Activated CD4-positive, alpha-beta memory T cell treated with anti-CD3 and anti-CD28 coated beads, Interleukin-2, amount 10 ng/mL, durations not matched to agents 7 days and 5 days (primary cell): ENCODE measurements at regions of chr21 and their contacts with region 1.

Region 1: DNA sequence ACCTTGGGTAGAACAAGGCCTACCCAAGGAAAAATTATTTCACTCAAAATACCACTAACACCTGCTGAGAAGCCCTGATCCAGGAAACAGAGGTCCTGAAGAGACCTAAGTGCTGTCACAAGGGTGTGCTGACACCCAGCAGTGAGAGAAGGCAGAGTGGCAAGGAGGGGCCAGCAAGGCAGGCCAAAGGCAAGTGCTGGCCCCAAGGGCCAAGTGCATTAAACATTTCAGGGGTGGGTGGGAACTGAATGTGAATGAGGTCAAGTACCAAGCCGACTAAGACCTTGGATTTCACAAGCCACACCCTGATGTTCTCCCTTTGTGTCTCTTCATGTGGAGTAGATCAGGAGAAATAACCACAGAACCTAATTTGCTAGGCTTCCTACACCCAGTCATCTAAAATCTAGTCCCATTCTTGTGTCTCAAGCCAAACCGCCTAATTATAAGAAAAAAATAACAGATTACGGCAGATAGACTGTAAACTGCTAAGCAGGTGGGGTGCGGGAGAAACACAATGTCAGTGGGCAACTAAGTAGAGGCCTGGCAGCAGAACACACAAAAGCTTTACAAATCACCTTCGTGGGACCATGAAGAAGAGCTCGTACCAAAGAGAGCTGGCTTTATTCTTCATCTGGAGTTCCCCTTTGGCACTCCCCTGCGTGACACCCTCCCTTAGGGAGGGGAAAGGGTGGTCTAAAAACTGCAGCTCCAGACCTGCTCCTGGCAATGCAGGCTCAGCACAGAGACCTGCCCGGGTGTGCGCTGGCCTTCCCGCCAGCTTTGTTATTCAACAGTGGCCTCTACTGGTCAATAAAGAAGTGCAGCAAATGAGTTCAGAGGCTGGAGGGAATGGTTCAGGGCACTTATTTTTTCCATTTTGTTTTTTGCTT is 8.7 kb downstream of the UBE2G2 start:
- DNase-seq: peak; percentile 59
- H3K4me3 Mint-ChIP-seq: no peak overlapping the region
- H3K27ac Mint-ChIP-seq: peak overlapping the region; percentile 50
- H3K4me1 Mint-ChIP-seq: peaks cover 36% of the 10 kb centered on the region
- H3K27me3 Mint-ChIP-seq: no peaks in the 10 kb centered on the region

Region 2: GRCh38 chr21:44510508-44511210 is 282.3 kb before region 1 on chr21:
- CTCF ChIA-PET with region 1: interaction called, 51 read pairs
- POLR2A ChIA-PET with region 1: no interaction called
- DNase-seq: peak; percentile 84
- H3K4me3 Mint-ChIP-seq: no peak overlapping the region
- H3K27ac Mint-ChIP-seq: no peak overlapping the region
- H3K4me1 Mint-ChIP-seq: peaks cover 6% of the 10 kb centered on the region
- H3K27me3 Mint-ChIP-seq: no peaks in the 10 kb centered on the region

Region 3: DNA sequence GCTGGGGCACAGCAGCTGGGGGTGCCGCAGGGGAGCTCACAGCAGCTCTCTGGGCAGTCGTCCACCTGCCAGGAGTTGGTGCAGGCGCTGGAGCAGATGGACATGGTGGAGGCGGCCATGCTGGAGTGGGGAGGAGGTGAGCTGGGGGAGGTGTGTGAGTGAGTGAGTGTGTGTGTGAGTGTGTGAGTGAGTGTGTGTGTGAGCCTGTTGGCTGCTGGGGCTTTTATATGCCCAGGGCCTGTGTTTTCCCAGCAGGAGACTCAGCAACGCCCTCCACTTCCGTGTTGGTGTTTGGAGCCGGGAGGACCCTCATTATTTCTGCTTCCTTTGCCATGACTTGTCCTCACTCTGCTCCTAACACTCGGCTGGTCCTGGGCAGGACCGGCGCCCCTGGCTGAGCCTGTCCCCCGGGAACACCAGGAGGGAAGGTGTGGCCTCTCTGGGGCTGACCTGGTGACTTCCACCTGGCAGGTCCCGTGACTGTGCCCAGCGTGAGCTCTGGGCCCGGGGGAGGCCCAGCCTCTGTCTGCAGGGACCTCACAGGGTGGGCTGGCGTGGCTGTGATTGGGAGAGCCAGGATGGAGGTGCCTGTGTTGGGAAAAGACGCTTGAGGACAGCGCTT is 241.5 kb before region 1 on chr21 and contains the start of gene KRTAP10-2:
- CTCF ChIA-PET with region 1: no interaction called
- POLR2A ChIA-PET with region 1: no interaction called
- DNase-seq: no peak
- H3K4me3 Mint-ChIP-seq: no peak within 1 kb of the TSS
- H3K27ac Mint-ChIP-seq: no peak within 1 kb of the TSS
- H3K4me1 Mint-ChIP-seq: peaks cover 20% of the 10 kb centered on the region
- H3K27me3 Mint-ChIP-seq: no peaks in the 10 kb centered on the region
- total RNA-seq, gene KRTAP10-2: not detected

Region 4: GRCh38 chr21:44583089-44583799 is 209.7 kb before region 1 on chr21:
- CTCF ChIA-PET with region 1: no interaction called
- POLR2A ChIA-PET with region 1: no interaction called
- DNase-seq: no peak
- H3K4me3 Mint-ChIP-seq: no peak overlapping the region
- H3K27ac Mint-ChIP-seq: no peak overlapping the region
- H3K4me1 Mint-ChIP-seq: peaks cover 13% of the 10 kb centered on the region
- H3K27me3 Mint-ChIP-seq: peaks cover 34% of the 10 kb centered on the region

Region 5: DNA sequence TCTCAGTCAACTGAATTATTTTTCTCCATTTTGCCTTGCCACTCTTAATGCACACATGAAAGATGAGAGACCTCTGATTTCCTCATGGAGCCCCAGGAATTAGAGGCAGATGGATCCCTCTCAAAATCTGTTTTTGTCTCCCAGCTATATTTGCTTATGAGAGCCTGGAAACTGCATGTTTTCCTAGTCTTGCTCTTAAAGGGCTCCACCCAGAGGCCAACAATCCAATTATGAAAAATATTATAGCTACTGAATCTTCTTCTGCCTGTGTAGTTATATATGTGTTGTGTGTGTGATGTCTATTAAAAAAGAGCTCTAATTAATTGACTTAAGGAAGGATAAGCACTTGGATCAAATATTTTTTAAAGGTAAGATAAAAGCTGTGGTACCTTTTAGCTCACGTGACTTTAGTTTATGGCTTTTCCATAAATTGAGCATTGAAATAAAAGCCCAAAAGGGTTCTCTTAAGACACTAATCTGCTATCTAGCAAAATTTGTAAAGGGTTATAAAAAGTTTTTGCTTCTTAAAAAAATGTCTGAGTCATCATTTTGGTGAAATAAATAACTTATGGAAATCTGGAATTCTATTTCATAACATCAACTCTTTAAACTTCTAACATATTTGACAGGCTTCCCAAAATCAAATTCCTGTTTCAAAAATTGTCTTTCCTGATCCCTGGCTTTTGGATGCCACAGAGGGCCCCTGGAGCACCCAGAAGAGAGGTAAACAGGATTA is 50.4 kb before region 1 on chr21:
- CTCF ChIA-PET with region 1: interaction called, 13 read pairs
- POLR2A ChIA-PET with region 1: no interaction called
- DNase-seq: no peak
- H3K4me3 Mint-ChIP-seq: no peak overlapping the region
- H3K27ac Mint-ChIP-seq: no peak overlapping the region
- H3K4me1 Mint-ChIP-seq: no peaks in the 10 kb centered on the region
- H3K27me3 Mint-ChIP-seq: peaks cover 11% of the 10 kb centered on the region

Region 6: DNA sequence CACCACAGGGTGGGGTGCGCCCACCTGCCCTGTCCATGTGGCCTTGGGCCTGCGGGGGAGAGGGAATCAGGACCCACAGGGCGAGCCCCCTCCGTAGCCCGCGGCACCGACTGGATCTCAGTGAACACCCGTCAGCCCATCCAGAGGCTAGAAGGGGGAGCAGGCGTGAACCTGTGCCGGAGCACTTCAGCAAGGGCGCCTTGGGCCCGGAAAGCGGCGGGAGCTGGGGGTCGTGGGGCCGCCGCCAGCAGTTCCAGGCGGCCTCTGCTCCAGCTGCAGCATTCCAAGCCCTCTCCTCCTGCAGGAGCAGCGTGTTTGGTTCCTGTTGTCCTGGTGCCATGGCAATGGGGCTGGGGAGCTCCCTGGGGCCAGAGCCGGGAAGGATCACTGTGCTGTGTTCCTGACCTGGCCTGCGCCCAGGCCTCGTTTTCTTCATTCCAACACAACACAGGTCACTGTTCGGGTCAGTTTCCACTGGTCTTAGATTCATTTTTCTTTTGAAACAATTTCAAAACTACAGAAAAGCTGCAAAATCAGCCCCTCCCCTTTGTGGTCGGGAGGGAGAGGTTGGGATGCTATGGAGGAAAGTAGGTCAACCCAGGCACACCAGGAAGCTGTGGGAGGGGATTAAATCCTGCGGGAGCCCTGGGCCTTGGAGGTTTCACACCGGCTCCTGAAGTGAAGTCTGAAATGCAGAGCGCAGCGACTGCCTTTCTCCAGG is 165.7 kb after region 1 on chr21:
- CTCF ChIA-PET with region 1: no interaction called
- POLR2A ChIA-PET with region 1: no interaction called
- DNase-seq: no peak
- H3K4me3 Mint-ChIP-seq: no peak overlapping the region
- H3K27ac Mint-ChIP-seq: peak overlapping the region; percentile 44
- H3K4me1 Mint-ChIP-seq: peaks cover 3% of the 10 kb centered on the region
- H3K27me3 Mint-ChIP-seq: no peaks in the 10 kb centered on the region